ENCODE measurements at regions of chr11 and their contacts with region 1.

Region 1: DNA sequence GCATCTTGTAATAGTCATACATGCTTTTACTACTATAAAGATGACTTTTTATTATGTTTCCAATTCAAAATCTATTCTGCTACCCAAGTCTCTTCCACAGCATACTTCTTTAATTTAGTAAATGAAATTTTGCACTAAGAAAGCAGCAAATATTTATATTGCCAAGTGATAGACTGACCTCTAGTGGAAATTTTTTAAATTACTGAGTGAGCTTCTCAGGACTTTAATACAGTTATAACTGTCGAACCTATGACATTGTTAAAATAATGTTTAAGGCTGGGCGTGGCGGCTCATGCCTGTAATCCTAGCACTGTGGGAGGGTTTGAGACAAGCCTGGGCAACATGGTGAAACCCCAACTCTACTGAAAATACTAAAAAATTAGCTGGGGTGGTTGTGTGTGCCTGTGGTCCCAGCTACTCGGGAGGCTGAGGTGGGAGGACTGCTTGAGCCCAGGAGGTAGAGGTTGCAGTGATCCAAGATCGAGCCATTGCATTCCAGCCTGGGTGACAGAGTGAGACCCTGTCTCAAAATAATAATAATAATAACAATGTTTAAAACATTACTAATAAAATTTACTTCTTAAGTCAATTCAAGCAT is 27.3 kb downstream of the STK33 start:
- DNase-seq: no peak
- ATAC-seq: no peak
- H3K4me3 ChIP-seq: no peak overlapping the region
- H3K27ac ChIP-seq: no peak overlapping the region
- H3K4me1 ChIP-seq: no peaks in the 10 kb centered on the region
- H3K27me3 ChIP-seq: no peaks in the 10 kb centered on the region
- CTCF ChIP-seq: peak; percentile 48 to 73 (median 56)
- POLR2A ChIP-seq: no peak

Region 2: GRCh38 chr11:8225589-8226036 is 341.1 kb before region 1 on chr11:
- in situ Hi-C with region 1: loop called (anchors 5 to 10 kb)
- intact Hi-C with region 1: loop called (anchors 2 kb)
- DNase-seq: peak; percentile 43 to 62
- ATAC-seq: peak; percentile 58 to 81
- H3K4me3 ChIP-seq: no peak overlapping the region
- H3K27ac ChIP-seq: no peak overlapping the region
- H3K4me1 ChIP-seq: no peaks in the 10 kb centered on the region
- H3K27me3 ChIP-seq: no peaks in the 10 kb centered on the region
- CTCF ChIP-seq: peak; percentile 95
- POLR2A ChIP-seq: no peak

Region 3: GRCh38 chr11:8328848-8329330 is 237.8 kb before region 1 on chr11:
- in situ Hi-C with region 1: loop called in 1 of 4 experiments (anchors 25 kb)
- intact Hi-C with region 1: loop called (anchors 5 kb)
- DNase-seq: peak; percentile 32 to 76
- ATAC-seq: peak; percentile 80 to 94
- H3K4me3 ChIP-seq: peak overlapping the region; percentile 7 to 46 (median 17)
- H3K27ac ChIP-seq: no peak overlapping the region
- H3K4me1 ChIP-seq: peaks cover 4 to 5% of the 10 kb centered on the region in 2 donors
- H3K27me3 ChIP-seq: no peaks in the 10 kb centered on the region
- CTCF ChIP-seq: peak; percentile 26 to 77 (median 60)
- POLR2A ChIP-seq: no peak

Region 4: GRCh38 chr11:8333811-8334401 is 232.8 kb before region 1 on chr11:
- in situ Hi-C with region 1: loop called in 1 of 4 experiments (anchors 25 kb)
- intact Hi-C with region 1: loop called (anchors 5 kb)
- DNase-seq: no peak
- ATAC-seq: no peak
- H3K4me3 ChIP-seq: no peak overlapping the region
- H3K27ac ChIP-seq: no peak overlapping the region
- H3K4me1 ChIP-seq: peaks cover 4 to 5% of the 10 kb centered on the region in 2 donors
- H3K27me3 ChIP-seq: no peaks in the 10 kb centered on the region
- CTCF ChIP-seq: no peak
- POLR2A ChIP-seq: no peak

Region 5: GRCh38 chr11:8426076-8426475 is 140.6 kb before region 1 on chr11:
- in situ Hi-C with region 1: no loop called
- intact Hi-C with region 1: no loop called
- DNase-seq: no peak
- ATAC-seq: no peak
- H3K4me3 ChIP-seq: no peak overlapping the region
- H3K27ac ChIP-seq: no peak overlapping the region
- H3K4me1 ChIP-seq: no peaks in the 10 kb centered on the region
- H3K27me3 ChIP-seq: no peaks in the 10 kb centered on the region
- CTCF ChIP-seq: no peak
- POLR2A ChIP-seq: no peak

Region 6: GRCh38 chr11:8477680-8478079 is 89.0 kb before region 1 on chr11:
- in situ Hi-C with region 1: no loop called
- intact Hi-C with region 1: no loop called
- DNase-seq: no peak
- ATAC-seq: no peak
- H3K4me3 ChIP-seq: no peak overlapping the region
- H3K27ac ChIP-seq: no peak overlapping the region
- H3K4me1 ChIP-seq: no peaks in the 10 kb centered on the region
- H3K27me3 ChIP-seq: no peaks in the 10 kb centered on the region
- CTCF ChIP-seq: no peak
- POLR2A ChIP-seq: no peak

Region 7: GRCh38 chr11:8604078-8604723 is 37.5 kb after region 1 on chr11:
- in situ Hi-C with region 1: no loop called
- intact Hi-C with region 1: no loop called
- DNase-seq: peak; percentile 18 to 23
- ATAC-seq: peak; percentile 86 to 89
- H3K4me3 ChIP-seq: no peak overlapping the region
- H3K27ac ChIP-seq: peak overlapping the region in 2 of 4 donors; percentile 33 to 35
- H3K4me1 ChIP-seq: no peaks in the 10 kb centered on the region
- H3K27me3 ChIP-seq: no peaks in the 10 kb centered on the region
- CTCF ChIP-seq: peak in 2 of 5 experiments; percentile 42 to 55
- POLR2A ChIP-seq: no peak

Measured in gastrocnemius medialis (tissue), 4 donors.